Endothelial cell of umbilical vein (primary cell): ENCODE measurements at regions of chrX and their contacts with region 1.

Region 1: DNA sequence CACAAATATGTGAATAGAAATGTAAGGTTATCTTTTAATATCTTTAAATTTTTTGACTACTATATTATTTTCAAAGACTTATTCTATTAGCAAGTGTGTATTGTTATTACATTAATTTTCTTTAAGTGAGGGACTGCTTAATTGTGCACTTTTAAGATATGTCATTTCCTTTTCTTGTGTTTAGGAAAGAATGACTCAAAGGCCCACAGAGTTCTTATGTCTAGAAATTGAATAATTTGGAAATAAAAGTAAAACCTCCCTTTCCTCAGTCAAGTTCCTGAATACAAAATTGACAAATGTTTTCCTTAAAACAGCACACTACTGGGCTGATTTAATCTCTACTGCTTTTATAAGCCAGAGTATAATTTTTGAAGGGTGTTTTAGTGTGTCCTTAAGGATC is 169.7 kb downstream of the TMEM47 start:
- DNase-seq: peak; percentile 74
- H3K4me3 ChIP-seq: peak overlapping the region in 1 of 3 experiments; percentile 17
- H3K27ac ChIP-seq: peak overlapping the region; percentile 72
- H3K4me1 ChIP-seq: peaks cover 15% of the 10 kb centered on the region
- H3K27me3 ChIP-seq: no peaks in the 10 kb centered on the region
- CTCF ChIP-seq: no peak
- POLR2A ChIP-seq: no peak

Region 2: DNA sequence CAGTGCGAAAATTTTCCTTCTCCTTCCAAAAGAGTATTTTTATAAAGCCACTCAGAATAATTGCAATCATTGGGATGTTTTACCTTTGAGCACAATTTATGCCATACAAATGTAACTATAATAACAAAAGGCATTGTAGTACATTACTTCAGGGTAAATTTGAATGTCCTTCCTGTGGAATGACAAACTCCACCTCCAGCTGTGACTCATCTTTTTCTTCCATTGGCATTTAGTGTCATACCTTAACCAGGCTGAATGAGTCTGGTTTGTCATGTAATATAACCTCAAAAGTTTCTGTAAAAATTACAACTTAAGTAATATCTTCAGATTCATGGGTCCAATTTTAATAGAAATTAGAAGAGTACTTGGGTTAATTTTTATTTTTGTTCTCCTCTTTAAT is 76.4 kb after region 1 on chrX:
- CTCF ChIA-PET with region 1: no interaction called
- POLR2A ChIA-PET with region 1: no interaction called
- dilution Hi-C with region 1: no loop called
- intact Hi-C with region 1: loop called (anchors 1 kb)
- DNase-seq: no peak
- H3K4me3 ChIP-seq: no peak overlapping the region
- H3K27ac ChIP-seq: no peak overlapping the region
- H3K4me1 ChIP-seq: peaks cover 25% of the 10 kb centered on the region
- H3K27me3 ChIP-seq: no peaks in the 10 kb centered on the region
- CTCF ChIP-seq: no peak
- POLR2A ChIP-seq: no peak